ENCODE measurements at regions of chr12 and their contacts with region 1.

Region 1: DNA sequence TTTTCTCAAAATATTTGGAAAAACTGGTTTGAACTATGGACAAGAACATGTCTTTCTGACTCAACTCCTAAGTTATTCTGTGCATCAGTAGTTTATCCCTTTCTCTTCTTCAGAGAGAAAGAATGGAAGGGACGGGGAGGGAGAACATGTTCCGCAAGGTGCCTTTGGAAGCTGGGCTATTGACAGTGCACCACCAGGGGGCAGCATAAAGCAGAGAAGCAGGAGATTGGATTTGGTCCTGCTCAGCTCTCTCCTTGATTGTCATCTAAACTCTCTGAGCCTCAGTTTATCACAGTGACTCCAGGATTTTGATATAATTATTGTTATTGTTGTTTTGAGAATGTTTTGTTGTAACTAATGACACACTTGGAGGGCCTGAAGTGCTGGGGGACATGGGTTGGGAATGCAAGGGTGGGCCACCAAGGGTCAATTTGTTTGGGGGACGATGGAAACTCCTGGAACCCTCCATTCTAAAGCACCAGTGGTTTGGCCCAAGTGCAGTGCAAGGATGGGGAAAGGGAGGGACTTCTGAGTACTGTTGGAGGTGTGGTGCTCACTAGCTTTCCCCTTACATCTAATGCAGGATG is 45.3 kb upstream of the ANO6 start:
- DNase-seq: peak; percentile 84 to 91
- ATAC-seq: peak; percentile 81
- H3K4me3 ChIP-seq: no peak overlapping the region
- H3K27ac ChIP-seq: no peak overlapping the region
- H3K4me1 ChIP-seq: peaks cover 2% of the 10 kb centered on the region in 2 donors
- H3K27me3 ChIP-seq: no peaks in the 10 kb centered on the region

Region 2: GRCh38 chr12:45388545-45388944 is 218.0 kb after region 1 on chr12:
- intact Hi-C with region 1: loop called in 1 of 2 experiments (anchors 5 kb)
- DNase-seq: no peak
- ATAC-seq: peak; percentile 65
- H3K4me3 ChIP-seq: no peak overlapping the region
- H3K27ac ChIP-seq: no peak overlapping the region
- H3K4me1 ChIP-seq: peaks cover 0 to 2% of the 10 kb centered on the region in 2 donors
- H3K27me3 ChIP-seq: no peaks in the 10 kb centered on the region

Region 3: DNA sequence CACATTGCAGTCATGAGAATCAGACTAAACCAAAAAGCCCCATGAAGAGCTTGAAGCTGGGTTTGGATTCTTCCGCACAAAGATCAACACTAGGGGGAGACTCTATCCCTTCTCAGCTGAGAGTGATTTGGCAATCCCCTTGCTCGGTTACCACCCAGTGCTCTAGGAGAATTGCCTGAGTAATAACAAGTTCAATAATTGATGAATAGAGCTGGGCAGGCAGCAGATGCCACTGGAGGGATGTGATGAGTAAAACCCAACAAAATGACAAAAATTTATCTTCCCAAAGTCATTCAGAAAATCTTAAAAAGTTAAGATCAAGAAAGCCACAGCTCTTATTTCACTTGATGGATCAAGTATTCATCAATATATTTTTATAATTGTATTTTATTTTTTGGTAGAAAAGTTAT is 373.4 kb after region 1 on chr12:
- intact Hi-C with region 1: loop called in 1 of 2 experiments (anchors 10 kb)
- DNase-seq: no peak
- ATAC-seq: peak; percentile 83
- H3K4me3 ChIP-seq: no peak overlapping the region
- H3K27ac ChIP-seq: no peak overlapping the region
- H3K4me1 ChIP-seq: no peaks in the 10 kb centered on the region
- H3K27me3 ChIP-seq: no peaks in the 10 kb centered on the region

Region 4: GRCh38 chr12:45713078-45713477 is 542.5 kb after region 1 on chr12:
- intact Hi-C with region 1: loop called in 1 of 2 experiments (anchors 10 kb)
- DNase-seq: no peak
- ATAC-seq: no peak
- H3K4me3 ChIP-seq: no peak overlapping the region
- H3K27ac ChIP-seq: no peak overlapping the region
- H3K4me1 ChIP-seq: peaks cover 0 to 2% of the 10 kb centered on the region in 2 donors
- H3K27me3 ChIP-seq: no peaks in the 10 kb centered on the region

Measured in aorta (tissue), 5 donors.